ENCODE measurements at regions of chr4 and their contacts with region 1.

Region 1: DNA sequence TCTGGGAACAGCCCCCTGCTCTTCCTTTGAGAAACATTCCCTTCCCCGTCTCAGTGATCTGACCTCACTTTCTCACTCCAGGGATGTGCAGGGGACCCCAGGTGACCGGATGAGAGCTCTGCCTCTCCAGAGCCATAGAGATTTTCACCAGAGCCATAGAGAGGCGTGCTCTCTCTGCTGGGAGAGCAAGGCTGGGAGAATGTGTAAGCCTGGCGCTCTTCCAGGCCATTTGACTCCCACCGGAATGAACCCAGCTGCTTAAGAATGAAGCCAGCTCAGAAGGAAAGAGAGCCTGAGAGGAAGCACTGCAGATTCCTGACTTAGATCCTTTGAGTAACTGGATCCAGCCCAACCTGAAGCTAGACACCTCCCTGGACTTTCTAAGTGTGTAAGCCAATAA is 106.4 kb downstream of the DHX15 start:
- DNase-seq: peak; percentile 76
- H3K4me3 ChIP-seq: no peak overlapping the region
- H3K27ac ChIP-seq: peak overlapping the region; percentile 23
- H3K27me3 ChIP-seq: peaks cover 3% of the 10 kb centered on the region
- CTCF ChIP-seq: peak; percentile 17; the same call in 1 of the 2 replicates

Region 2: GRCh38 chr4:24413291-24413784 is 64.6 kb before region 1 on chr4:
- CTCF ChIA-PET with region 1: no interaction called
- POLR2A ChIA-PET with region 1: no interaction called
- DNase-seq: no peak
- H3K4me3 ChIP-seq: no peak overlapping the region
- H3K27ac ChIP-seq: no peak overlapping the region
- H3K27me3 ChIP-seq: no peaks in the 10 kb centered on the region
- CTCF ChIP-seq: no peak

Region 3: GRCh38 chr4:24488399-24489164 is 10.7 kb after region 1 on chr4:
- CTCF ChIA-PET with region 1: interaction called, 17 read pairs
- POLR2A ChIA-PET with region 1: no interaction called
- DNase-seq: no peak
- H3K4me3 ChIP-seq: no peak overlapping the region
- H3K27ac ChIP-seq: no peak overlapping the region
- H3K27me3 ChIP-seq: peaks cover 7% of the 10 kb centered on the region
- CTCF ChIP-seq: peak; percentile 85

Region 4: DNA sequence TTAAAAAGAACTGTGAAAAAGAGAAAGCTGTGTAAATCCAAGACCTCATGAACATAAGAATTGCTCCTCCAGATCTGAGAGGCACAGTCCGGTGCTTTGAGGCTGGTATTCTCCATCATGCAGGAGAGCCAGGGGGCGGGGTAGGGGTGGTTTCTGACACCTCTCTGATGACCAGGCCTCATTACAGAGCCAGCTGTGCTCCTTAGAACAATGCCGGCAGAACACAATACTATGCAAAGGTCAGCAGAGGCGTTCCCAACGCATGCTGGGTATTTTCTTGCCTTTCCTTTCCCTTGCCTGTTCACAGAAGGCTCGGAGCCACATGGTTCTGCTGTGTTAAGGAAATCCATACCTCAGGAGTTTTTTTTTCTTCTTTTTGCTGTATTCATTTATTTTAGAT is 226.2 kb after region 1 on chr4:
- CTCF ChIA-PET with region 1: no interaction called
- POLR2A ChIA-PET with region 1: no interaction called
- DNase-seq: no peak
- H3K4me3 ChIP-seq: no peak overlapping the region
- H3K27ac ChIP-seq: no peak overlapping the region
- H3K27me3 ChIP-seq: peaks cover 4% of the 10 kb centered on the region
- CTCF ChIP-seq: no peak

Measured in AG04450 (cell line).